ENCODE measurements at regions of chr7 and their contacts with region 1.

Region 1: GRCh38 chr7:105079348-105079747 is 65.3 kb downstream of the KMT2E start:
- DNase-seq: no peak
- H3K4me3 Mint-ChIP-seq: no peak overlapping the region
- H3K27ac Mint-ChIP-seq: no peak overlapping the region
- H3K4me1 Mint-ChIP-seq: peaks cover 8% of the 10 kb centered on the region
- H3K27me3 Mint-ChIP-seq: no peaks in the 10 kb centered on the region

Region 2: DNA sequence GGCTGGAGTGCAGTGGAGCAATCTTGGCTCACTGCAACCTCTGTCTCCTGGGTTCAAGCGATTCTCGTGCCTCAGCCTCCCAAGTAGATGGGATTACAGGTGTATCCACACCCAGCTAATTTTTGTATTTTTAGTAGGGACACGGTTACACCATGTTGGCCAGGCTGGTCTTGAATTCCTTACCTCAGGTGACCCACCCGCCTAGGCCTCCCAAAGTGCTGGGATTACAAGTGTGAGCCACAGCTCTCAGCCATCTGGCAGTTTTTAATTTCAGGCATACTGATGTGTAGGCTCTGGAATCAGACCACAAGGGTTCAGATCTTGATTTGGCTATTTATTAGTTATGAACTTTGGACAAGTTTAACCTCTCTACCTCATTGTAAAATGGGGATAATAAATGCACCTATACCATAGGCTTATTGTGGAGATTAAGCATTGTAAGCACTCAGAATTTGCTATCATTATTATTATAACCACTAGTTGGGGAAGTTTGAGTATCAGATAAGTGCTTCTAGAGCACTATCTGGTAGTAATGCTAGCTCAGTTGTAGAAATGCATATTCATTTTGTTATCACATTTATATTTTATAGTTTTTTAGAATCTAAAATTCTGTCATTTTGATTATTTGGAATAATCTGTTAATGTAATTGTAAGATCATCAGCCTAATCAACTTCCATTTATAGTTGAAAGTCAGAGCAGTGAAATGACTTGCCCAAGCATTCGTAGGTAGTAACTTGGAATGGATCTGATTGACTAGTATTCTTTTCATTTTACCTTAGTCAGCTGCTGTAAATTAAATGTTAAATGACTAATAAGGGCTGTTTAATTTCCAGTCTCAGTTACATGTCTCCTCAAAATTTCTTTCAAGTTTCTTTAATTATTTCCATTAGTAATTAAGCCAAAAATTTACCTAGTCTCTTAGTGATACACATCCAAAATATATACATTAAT is 42.9 kb before region 1 on chr7:
- intact Hi-C with region 1: loop called (anchors 5 kb)
- DNase-seq: no peak
- H3K4me3 Mint-ChIP-seq: no peak overlapping the region
- H3K27ac Mint-ChIP-seq: no peak overlapping the region
- H3K4me1 Mint-ChIP-seq: peaks cover 40% of the 10 kb centered on the region
- H3K27me3 Mint-ChIP-seq: no peaks in the 10 kb centered on the region

Region 3: DNA sequence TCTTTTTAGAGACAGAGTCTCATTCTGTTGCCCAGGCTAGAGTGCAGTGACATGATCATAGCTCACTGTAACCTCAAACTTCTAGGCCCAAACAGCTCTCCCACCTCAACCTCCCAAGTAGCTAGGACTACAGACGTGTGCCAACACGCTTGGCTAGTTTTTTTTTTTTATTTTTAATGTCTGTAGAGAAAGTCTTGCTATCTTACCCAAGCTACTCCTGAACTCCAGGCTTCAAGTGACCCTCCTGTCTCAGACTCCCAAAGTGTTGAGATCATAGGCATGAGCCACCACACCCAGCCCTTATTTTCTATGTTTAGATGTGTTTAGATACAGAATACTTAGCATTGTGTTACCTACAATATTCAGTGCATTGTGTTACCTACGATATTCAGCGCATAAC is 18.9 kb before region 1 on chr7:
- intact Hi-C with region 1: no loop called
- DNase-seq: no peak
- H3K4me3 Mint-ChIP-seq: no peak overlapping the region
- H3K27ac Mint-ChIP-seq: no peak overlapping the region
- H3K4me1 Mint-ChIP-seq: peaks cover 35% of the 10 kb centered on the region
- H3K27me3 Mint-ChIP-seq: no peaks in the 10 kb centered on the region

Measured in activated T-helper 2 cell treated with anti-CD3 and anti-CD28 coated beads, Interferon-gamma antibody, Interleukin-2, Interleukin-4, amounts not matched to agents 10 μg/mL and 5 μg/mL and 100 μg/mL, durations not matched to agents 14 hours and 24 hours and 36 hours (primary cell).